A673 (cell line): ENCODE measurements at regions of chr19 and their contacts with region 1.

Region 1: GRCh38 chr19:14347999-14348889 is 33.0 kb upstream of the ADGRE5 start:
- DNase-seq: peak; percentile 73
- H3K4me3 ChIP-seq: peak overlapping the region; percentile 36
- H3K27ac ChIP-seq: no peak overlapping the region
- H3K4me1 ChIP-seq: no peaks in the 10 kb centered on the region
- H3K27me3 ChIP-seq: no peaks in the 10 kb centered on the region
- CTCF ChIP-seq: peak; percentile 99

Region 2: GRCh38 chr19:14031719-14032480 is 316.3 kb before region 1 on chr19 and contains the start of gene IL27RA:
- CTCF ChIA-PET with region 1: no interaction called
- POLR2A ChIA-PET with region 1: no interaction called
- intact Hi-C with region 1: no loop called
- DNase-seq: peak; percentile 77
- H3K4me3 ChIP-seq: peak within 1 kb of the TSS; percentile 82
- H3K27ac ChIP-seq: peak within 1 kb of the TSS; percentile 77
- H3K4me1 ChIP-seq: no peaks in the 10 kb centered on the region
- H3K27me3 ChIP-seq: no peaks in the 10 kb centered on the region
- CTCF ChIP-seq: peak; percentile 86
- total RNA-seq, gene IL27RA: 5.4 and 6.0 TPM in 2 replicates

Region 3: DNA sequence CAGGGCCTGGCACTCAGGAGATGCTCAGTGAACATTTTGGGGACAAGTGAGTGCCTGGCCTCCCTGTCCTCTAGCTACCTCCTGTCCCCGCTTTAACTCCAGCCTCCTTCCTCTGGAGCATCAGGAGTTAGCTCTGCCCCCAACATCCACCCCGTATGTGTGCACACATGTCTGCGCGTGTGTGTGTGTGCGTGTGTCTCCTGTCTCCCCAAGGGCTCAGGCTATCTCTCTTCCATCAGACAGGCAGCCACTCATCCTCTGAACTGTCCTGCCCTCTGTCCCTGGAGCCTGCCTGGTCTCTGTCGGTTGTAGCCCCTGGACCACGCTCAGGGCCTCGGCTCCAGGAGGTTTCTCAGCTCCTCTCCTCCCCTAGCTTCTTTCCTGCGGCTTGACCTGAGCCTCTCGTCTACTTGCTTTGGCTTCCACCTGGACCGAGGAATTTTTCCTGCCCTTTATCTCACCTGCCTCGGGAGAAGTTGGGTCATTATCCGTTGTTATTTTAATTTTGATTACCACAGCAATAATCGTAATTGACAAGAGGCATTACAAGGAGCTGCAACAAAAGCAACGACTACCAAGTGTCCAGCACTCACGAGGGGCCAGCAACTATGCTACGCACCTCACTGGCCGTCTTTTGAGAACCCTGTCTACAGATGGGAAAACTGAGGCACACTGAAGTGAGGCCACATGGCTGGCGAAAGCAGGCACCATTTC is 179.8 kb before region 1 on chr19:
- CTCF ChIA-PET with region 1: no interaction called
- POLR2A ChIA-PET with region 1: no interaction called
- intact Hi-C with region 1: no loop called
- DNase-seq: no peak
- H3K4me3 ChIP-seq: no peak overlapping the region
- H3K27ac ChIP-seq: no peak overlapping the region
- H3K4me1 ChIP-seq: peaks cover 23% of the 10 kb centered on the region
- H3K27me3 ChIP-seq: no peaks in the 10 kb centered on the region
- CTCF ChIP-seq: no peak

Region 4: GRCh38 chr19:14198384-14199376 is 149.6 kb before region 1 on chr19:
- CTCF ChIA-PET with region 1: interaction called, 14 read pairs
- POLR2A ChIA-PET with region 1: no interaction called
- intact Hi-C with region 1: loop called (anchors 5 kb)
- DNase-seq: peak; percentile 42
- H3K4me3 ChIP-seq: no peak overlapping the region
- H3K27ac ChIP-seq: no peak overlapping the region
- H3K4me1 ChIP-seq: peaks cover 1% of the 10 kb centered on the region
- H3K27me3 ChIP-seq: no peaks in the 10 kb centered on the region
- CTCF ChIP-seq: peak; percentile 32; the same call in 1 of the 2 replicates